CD4-positive, alpha-beta memory T cell (primary cell): ENCODE measurements at regions of chr12 and their contacts with region 1.

Region 1: DNA sequence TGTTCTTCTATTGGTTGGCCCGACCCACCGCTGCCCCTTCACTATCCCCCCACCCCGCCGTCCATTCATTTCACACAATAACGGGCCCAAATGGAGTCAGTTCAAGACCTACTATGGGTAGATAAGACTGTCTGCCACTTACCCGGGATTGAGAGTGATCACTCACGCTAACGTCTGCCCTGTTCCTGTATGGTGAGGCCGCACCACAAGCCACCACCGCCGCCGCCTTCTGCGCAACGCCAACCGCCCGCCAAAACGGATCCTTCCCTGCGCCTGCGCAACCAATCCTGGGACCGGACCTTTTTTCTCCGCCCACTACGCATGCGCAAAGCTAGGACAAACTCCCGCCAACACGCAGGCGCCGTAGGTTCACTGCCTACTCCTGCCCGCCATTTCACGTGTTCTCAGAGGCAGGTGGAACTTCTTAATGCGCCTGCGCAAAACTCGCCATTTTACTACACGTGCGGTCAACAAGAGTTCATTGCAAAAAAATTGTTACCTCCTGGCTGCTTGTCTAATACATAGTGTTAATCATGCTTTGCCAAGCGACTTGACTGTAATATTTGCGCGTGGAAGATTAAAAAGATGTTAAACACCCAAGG is at the start of gene CBX5:
- DNase-seq: peak; percentile 99 to 100 (median 100)
- H3K4me3 ChIP-seq: peak within 1 kb of the TSS; percentile 90 to 94
- H3K4me3 Mint-ChIP-seq: no peak within 1 kb of the TSS
- H3K27ac ChIP-seq: peak within 1 kb of the TSS; percentile 92
- H3K27ac Mint-ChIP-seq: no peak within 1 kb of the TSS
- H3K4me1 ChIP-seq: peaks cover 76% of the 10 kb centered on the region
- H3K4me1 Mint-ChIP-seq: peaks cover 20 to 55% (median 34%) of the 10 kb centered on the region in 4 donors
- H3K27me3 ChIP-seq: no peaks in the 10 kb centered on the region
- H3K27me3 Mint-ChIP-seq: no peaks in the 10 kb centered on the region
- total RNA-seq, gene CBX5: 71.0 to 76.3 TPM

Region 2: DNA sequence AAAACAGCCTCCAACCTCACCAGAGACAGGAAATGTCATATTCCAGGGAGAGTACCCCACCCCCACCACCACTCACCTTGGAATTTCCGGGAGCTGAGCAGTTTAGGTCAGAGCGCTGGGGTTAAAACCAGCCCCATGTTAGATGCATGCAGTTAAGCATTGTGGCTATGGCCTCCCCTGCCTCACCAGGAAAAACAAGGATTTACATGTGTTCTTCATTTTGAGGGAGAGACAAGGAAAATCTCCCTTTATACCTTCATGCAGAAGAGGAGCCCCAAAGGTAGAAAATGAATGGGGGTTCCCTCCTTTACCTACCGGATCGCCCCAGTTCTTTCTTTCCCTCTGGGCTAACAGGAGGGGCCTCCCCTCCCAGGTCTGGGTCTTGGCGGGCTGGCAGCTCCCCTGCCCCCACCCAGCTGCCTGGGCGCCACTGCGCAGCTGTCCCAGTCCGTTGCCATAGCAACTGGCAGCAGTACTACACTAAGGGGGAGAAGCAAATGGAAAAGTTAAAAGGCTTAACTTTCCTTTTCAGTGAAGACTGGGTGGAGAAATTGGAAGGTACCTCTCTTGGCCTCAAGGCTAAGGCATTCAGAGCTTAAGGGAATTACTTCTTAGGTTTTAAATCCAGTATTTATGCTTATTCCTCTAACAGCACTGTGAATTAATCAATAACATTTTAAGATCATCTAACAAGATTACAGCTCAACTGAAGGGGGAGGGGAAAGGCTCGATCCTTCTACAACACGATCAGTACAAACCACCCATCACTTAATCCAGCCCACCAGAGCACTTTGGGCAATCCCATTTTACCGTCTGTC is 20.6 kb before region 1 on chr12:
- CTCF ChIA-PET with region 1: no interaction called
- POLR2A ChIA-PET with region 1: interaction called, 13 read pairs
- intact Hi-C with region 1: no loop called
- DNase-seq: peak in 4 of 5 donors; percentile 17 to 53 (median 40)
- H3K4me3 ChIP-seq: no peak overlapping the region
- H3K4me3 Mint-ChIP-seq: peak overlapping the region in 1 of 8 donors; percentile 51
- H3K27ac ChIP-seq: no peak overlapping the region
- H3K27ac Mint-ChIP-seq: peak overlapping the region in 4 of 7 donors; percentile 28 to 57 (median 46)
- H3K4me1 ChIP-seq: peaks cover 22% of the 10 kb centered on the region
- H3K4me1 Mint-ChIP-seq: peaks cover 11 to 26% (median 16%) of the 10 kb centered on the region in 4 donors
- H3K27me3 ChIP-seq: no peaks in the 10 kb centered on the region
- H3K27me3 Mint-ChIP-seq: no peaks in the 10 kb centered on the region

Region 3: DNA sequence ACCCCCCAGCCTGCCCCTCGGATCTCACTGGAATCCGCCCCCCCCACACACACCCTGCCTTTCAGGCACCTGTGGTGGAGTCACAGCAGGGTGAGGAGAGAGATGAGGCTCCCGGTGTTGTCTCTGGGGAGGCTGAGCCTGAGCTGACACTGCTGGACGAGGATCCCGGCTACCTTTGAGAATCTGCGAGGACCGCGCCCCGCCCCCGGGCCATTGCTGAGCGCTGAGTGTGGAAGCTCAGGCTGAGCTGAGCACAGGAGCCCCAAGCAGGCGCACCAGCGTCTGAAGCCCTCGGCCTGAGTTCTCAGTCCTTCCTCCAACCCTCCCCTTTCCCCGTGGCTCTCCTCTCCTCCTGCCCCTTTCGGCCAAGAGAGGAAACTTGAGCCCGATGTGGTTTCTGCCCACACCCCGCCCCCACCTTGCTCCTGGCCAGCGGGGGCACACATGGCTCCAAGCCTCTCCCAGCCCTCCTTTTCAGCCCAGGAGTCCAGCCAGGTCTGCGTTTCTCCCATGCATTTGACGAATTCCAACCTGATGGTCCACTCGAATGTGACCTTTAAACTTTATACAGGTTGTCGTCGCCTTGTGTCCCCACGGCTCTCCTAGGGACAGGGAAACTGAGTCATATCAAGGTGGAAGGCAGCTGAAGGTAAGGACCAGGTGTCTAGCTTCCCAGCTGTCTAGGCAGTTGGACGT is 20.9 kb after region 1 on chr12 and contains the start of gene NFE2:
- CTCF ChIA-PET with region 1: interaction called, 40 read pairs
- POLR2A ChIA-PET with region 1: interaction called, 16 read pairs
- intact Hi-C with region 1: no loop called
- DNase-seq: peak in 1 of 5 donors; percentile 37
- H3K4me3 ChIP-seq: no peak within 1 kb of the TSS
- H3K4me3 Mint-ChIP-seq: peak within 1 kb of the TSS in 7 of 8 donors; percentile 24 to 69 (median 45)
- H3K27ac ChIP-seq: no peak within 1 kb of the TSS
- H3K27ac Mint-ChIP-seq: no peak within 1 kb of the TSS
- H3K4me1 ChIP-seq: peaks cover 27% of the 10 kb centered on the region
- H3K4me1 Mint-ChIP-seq: peaks cover 9 to 39% (median 22%) of the 10 kb centered on the region in 4 donors
- H3K27me3 ChIP-seq: peaks cover 19% of the 10 kb centered on the region
- H3K27me3 Mint-ChIP-seq: peaks cover 24 to 45% of the 10 kb centered on the region in 2 donors
- total RNA-seq, gene NFE2: not detected

Region 4: GRCh38 chr12:54359033-54359761 is 79.2 kb after region 1 on chr12:
- CTCF ChIA-PET with region 1: interaction called, 4 read pairs
- POLR2A ChIA-PET with region 1: interaction called, 62 read pairs
- intact Hi-C with region 1: loop called (anchors 1 kb)
- DNase-seq: peak; percentile 93 to 99 (median 95)
- H3K4me3 ChIP-seq: peak overlapping the region; percentile 87 to 91
- H3K4me3 Mint-ChIP-seq: no peak overlapping the region
- H3K27ac ChIP-seq: peak overlapping the region; percentile 95
- H3K27ac Mint-ChIP-seq: no peak overlapping the region
- H3K4me1 ChIP-seq: peaks cover 36% of the 10 kb centered on the region
- H3K4me1 Mint-ChIP-seq: peaks cover 10 to 19% (median 14%) of the 10 kb centered on the region in 4 donors
- H3K27me3 ChIP-seq: no peaks in the 10 kb centered on the region
- H3K27me3 Mint-ChIP-seq: no peaks in the 10 kb centered on the region

Region 5: GRCh38 chr12:54497883-54498282 is 217.9 kb after region 1 on chr12:
- CTCF ChIA-PET with region 1: no interaction called
- POLR2A ChIA-PET with region 1: interaction called, 4 read pairs
- intact Hi-C with region 1: loop called (anchors 1 kb)
- DNase-seq: no peak
- H3K4me3 ChIP-seq: peak overlapping the region; percentile 74 to 78
- H3K4me3 Mint-ChIP-seq: peak overlapping the region; percentile 94 to 100 (median 99)
- H3K27ac ChIP-seq: peak overlapping the region; percentile 78
- H3K27ac Mint-ChIP-seq: peak overlapping the region; percentile 88 to 99 (median 98)
- H3K4me1 ChIP-seq: peaks cover 40% of the 10 kb centered on the region
- H3K4me1 Mint-ChIP-seq: peaks cover 33 to 56% (median 37%) of the 10 kb centered on the region in 4 donors
- H3K27me3 ChIP-seq: no peaks in the 10 kb centered on the region
- H3K27me3 Mint-ChIP-seq: no peaks in the 10 kb centered on the region